MCF 10A (cell line): ENCODE measurements at regions of chr1 and their contacts with region 1.

Region 1: DNA sequence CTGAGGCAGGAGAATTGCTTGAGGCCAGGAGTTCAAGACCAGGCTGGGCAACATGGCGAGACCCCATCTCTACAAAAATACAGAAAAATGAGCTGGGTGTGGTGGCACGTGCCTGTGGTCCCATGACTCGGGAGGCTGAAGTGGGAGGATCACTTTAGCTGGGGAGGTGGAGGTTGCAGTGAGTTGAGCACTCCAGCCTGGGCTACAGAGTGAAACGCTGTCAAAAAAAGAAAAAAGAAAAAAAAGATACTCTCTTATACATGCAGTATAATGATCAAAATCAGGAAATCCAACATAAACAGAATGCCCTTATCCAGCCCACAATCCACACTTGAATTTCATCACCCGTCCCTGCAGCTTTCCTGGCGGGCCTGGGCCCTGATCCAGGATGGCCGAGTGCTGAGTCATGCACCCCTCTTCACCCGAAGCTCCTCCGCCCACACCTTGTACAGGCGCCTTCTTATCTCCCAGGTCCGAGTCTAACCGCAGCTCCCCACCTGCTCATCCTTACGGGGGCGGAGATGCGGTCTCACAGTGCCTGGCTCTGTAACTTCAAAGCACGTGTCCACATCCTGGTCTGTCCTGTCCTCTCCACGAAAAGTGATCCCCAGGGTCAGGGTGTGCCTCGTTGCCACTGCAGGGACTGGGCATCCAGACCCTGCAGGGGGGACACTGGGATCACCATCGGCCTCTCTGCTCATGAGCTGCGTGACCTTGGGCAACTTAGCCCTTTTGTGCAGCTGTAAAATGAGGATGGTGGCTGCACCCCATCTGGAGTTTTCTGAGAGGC is 120.2 kb upstream of the SLC45A1 start:
- DNase-seq: peak; percentile 97
- H3K4me3 Mint-ChIP-seq: peak overlapping the region; percentile 24
- H3K27ac Mint-ChIP-seq: peak overlapping the region; percentile 77
- H3K4me1 Mint-ChIP-seq: peaks cover 64% of the 10 kb centered on the region
- H3K27me3 Mint-ChIP-seq: no peaks in the 10 kb centered on the region
- CTCF ChIP-seq: no peak

Region 2: GRCh38 chr1:8004803-8005554 is 192.7 kb before region 1 on chr1:
- CTCF ChIA-PET with region 1: no interaction called
- POLR2A ChIA-PET with region 1: interaction called, 16 read pairs
- intact Hi-C with region 1: no loop called
- DNase-seq: peak; percentile 99
- H3K4me3 Mint-ChIP-seq: peak overlapping the region; percentile 57
- H3K27ac Mint-ChIP-seq: peak overlapping the region; percentile 84
- H3K4me1 Mint-ChIP-seq: peaks cover 38% of the 10 kb centered on the region
- H3K27me3 Mint-ChIP-seq: no peaks in the 10 kb centered on the region
- CTCF ChIP-seq: no peak

Region 3: GRCh38 chr1:8154621-8155052 is 43.1 kb before region 1 on chr1:
- CTCF ChIA-PET with region 1: interaction called, 4 read pairs
- POLR2A ChIA-PET with region 1: interaction called, 11 read pairs
- intact Hi-C with region 1: no loop called
- DNase-seq: peak; percentile 91
- H3K4me3 Mint-ChIP-seq: peak overlapping the region; percentile 13
- H3K27ac Mint-ChIP-seq: peak overlapping the region; percentile 98
- H3K4me1 Mint-ChIP-seq: peaks cover 14% of the 10 kb centered on the region
- H3K27me3 Mint-ChIP-seq: no peaks in the 10 kb centered on the region
- CTCF ChIP-seq: no peak

Region 4: GRCh38 chr1:8174807-8175206 is 22.9 kb before region 1 on chr1:
- CTCF ChIA-PET with region 1: no interaction called
- POLR2A ChIA-PET with region 1: interaction called, 30 read pairs
- intact Hi-C with region 1: no loop called
- DNase-seq: peak; percentile 75
- H3K4me3 Mint-ChIP-seq: no peak overlapping the region
- H3K27ac Mint-ChIP-seq: peak overlapping the region; percentile 93
- H3K4me1 Mint-ChIP-seq: peaks cover 14% of the 10 kb centered on the region
- H3K27me3 Mint-ChIP-seq: no peaks in the 10 kb centered on the region
- CTCF ChIP-seq: no peak

Region 5: DNA sequence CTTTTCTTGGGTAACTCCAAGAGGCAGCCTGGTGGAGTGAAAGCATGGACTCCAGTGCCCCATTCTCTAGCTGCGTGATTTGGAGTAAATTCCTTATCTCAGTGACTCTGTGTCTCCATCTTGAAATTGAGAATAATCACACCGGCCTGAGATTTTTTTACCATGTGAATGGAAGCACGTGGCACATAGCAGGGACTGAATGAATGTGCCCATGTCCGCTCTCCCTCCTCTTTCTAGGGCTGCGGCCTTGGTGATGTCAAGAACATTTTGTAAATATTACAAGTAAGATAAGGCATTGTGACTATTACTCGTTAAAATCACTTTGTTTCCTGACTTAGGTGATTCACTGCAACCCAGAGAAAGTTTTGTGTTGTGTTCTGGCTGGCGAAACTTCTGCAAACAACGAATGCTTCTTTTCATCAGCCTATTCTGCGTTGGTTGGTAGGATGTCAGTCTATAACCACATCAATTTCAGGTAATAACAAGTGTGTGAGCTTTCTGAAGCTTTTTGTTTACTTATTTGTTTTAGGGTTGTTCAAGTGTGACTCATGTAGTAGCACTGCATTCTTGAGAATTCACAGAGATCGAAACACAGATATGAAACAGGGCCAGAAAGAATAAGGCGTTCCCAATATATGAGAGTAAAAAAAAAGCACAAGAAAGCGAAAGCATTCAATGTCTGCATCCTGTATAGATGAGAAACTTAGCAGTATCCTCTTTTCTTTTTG is 15.5 kb before region 1 on chr1:
- CTCF ChIA-PET with region 1: interaction called, 3 read pairs
- POLR2A ChIA-PET with region 1: interaction called, 107 read pairs
- intact Hi-C with region 1: no loop called
- DNase-seq: peak; percentile 90
- H3K4me3 Mint-ChIP-seq: peak overlapping the region; percentile 33
- H3K27ac Mint-ChIP-seq: peak overlapping the region; percentile 96
- H3K4me1 Mint-ChIP-seq: peaks cover 24% of the 10 kb centered on the region
- H3K27me3 Mint-ChIP-seq: no peaks in the 10 kb centered on the region
- CTCF ChIP-seq: no peak

Region 6: DNA sequence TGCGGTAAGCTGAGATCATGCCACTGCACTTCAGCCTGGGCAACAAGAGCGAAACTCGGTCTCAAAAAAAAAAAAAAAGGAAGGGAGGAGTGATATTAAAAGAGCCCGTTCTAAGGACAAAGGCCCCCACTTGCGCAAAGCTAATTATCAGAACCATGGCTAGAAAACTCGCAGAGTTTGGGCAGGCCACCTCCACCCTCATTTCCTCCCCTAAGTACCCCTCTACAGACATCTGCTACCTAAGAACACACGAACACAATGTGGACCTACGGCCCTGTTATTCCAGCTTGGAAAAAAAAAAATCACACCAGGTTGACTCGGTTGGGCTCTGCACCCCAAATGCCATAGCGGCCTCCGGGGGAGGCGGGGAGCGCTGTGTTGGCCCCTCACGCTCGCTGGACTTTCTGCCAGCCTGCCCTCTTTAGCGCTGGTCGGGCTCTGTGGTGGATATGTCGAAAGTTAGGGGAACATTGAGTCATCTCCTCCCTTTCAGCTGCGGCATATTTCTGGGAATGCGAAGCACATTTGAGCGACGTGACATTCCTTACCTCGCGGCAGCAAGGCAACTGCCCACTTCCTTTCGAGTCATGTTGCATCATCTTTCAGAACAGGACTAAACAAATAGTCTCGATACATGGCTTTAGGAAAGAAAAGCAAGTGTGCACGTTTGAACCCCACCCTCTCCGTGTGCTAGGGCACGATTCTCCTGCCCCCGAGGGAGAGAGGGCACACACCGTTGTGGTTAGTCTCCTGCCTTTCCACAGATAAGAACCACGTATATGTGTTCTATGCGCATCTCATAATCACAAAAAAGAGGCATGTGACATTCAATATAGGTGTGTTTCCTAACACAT is 14.1 kb after region 1 on chr1:
- CTCF ChIA-PET with region 1: interaction called, 3 read pairs
- POLR2A ChIA-PET with region 1: interaction called, 24 read pairs
- intact Hi-C with region 1: no loop called
- DNase-seq: peak; percentile 99
- H3K4me3 Mint-ChIP-seq: peak overlapping the region; percentile 51
- H3K27ac Mint-ChIP-seq: peak overlapping the region; percentile 85
- H3K4me1 Mint-ChIP-seq: peaks cover 26% of the 10 kb centered on the region
- H3K27me3 Mint-ChIP-seq: no peaks in the 10 kb centered on the region
- CTCF ChIP-seq: no peak

Region 7: DNA sequence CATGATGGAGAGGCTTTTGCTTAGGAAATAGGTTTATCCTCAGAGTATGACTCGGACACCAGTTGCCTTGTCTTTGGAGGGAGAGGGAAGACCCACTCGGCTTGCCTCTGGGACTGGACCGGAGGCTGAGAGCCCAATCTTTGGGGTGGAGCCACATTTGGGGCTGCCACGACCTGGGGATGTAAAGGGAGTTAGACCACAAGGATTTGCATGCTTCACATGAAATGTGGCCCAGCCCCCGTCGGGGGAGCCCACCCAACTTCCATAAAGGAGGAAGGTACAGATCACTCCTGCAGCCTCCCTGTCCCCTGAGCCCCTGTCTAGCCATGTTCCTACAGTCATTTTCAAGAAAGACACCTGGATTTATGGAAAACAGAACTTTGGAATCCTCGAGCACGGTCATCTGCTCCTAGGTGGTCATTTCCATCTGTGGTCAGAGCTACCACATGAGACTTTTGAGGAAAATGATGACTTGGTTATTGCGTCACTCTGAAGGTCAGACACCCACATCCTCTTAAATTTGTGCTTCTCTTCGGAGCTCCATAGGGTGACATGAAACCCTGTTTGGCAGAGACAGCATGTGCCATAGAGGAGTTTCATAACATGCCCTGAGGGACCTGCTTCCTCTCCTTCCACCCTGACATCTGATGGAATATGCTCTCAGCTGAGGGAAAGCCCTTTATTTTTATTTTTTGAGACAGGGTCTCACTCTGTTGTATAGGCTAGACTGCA is 20.8 kb after region 1 on chr1:
- CTCF ChIA-PET with region 1: interaction called, 3 read pairs
- POLR2A ChIA-PET with region 1: interaction called, 13 read pairs
- intact Hi-C with region 1: no loop called
- DNase-seq: peak; percentile 83
- H3K4me3 Mint-ChIP-seq: no peak overlapping the region
- H3K27ac Mint-ChIP-seq: no peak overlapping the region
- H3K4me1 Mint-ChIP-seq: peaks cover 20% of the 10 kb centered on the region
- H3K27me3 Mint-ChIP-seq: no peaks in the 10 kb centered on the region
- CTCF ChIP-seq: no peak